K562 (cell line): ENCODE measurements at regions of chr3 and their contacts with region 1.

Region 1: GRCh38 chr3:135149707-135150681 is 354.9 kb downstream of the EPHB1 start:
- DNase-seq: no peak
- ATAC-seq: no peak
- H3K4me3 ChIP-seq: no peak overlapping the region
- H3K27ac ChIP-seq: no peak overlapping the region
- H3K4me1 ChIP-seq: no peaks in the 10 kb centered on the region
- H3K27me3 ChIP-seq: no peaks in the 10 kb centered on the region
- CTCF ChIP-seq: no peak
- EP300 ChIP-seq: no peak
- POLR2A ChIP-seq: no peak
- RAD21 ChIP-seq: no peak

Region 2: GRCh38 chr3:135165260-135165659 is 15.3 kb after region 1 on chr3:
- CTCF ChIA-PET with region 1: no interaction called
- POLR2A ChIA-PET with region 1: no interaction called
- in situ Hi-C with region 1: no loop called
- intact Hi-C with region 1: loop called (anchors 1 kb)
- DNase-seq: no peak
- ATAC-seq: no peak
- H3K4me3 ChIP-seq: no peak overlapping the region
- H3K27ac ChIP-seq: no peak overlapping the region
- H3K4me1 ChIP-seq: no peaks in the 10 kb centered on the region
- H3K27me3 ChIP-seq: no peaks in the 10 kb centered on the region
- CTCF ChIP-seq: no peak
- EP300 ChIP-seq: no peak
- POLR2A ChIP-seq: no peak
- RAD21 ChIP-seq: no peak